WTC11 (cell line): ENCODE measurements at regions of chr6 and their contacts with region 1.

Region 1: GRCh38 chr6:158660333-158660754 is 10.5 kb downstream of the SYTL3 start:
- DNase-seq: peak; percentile 52
- ATAC-seq: peak; percentile 78
- H3K4me3 Mint-ChIP-seq: no peak overlapping the region
- H3K27ac Mint-ChIP-seq: no peak overlapping the region
- H3K4me1 Mint-ChIP-seq: peaks cover 23% of the 10 kb centered on the region
- H3K27me3 Mint-ChIP-seq: peaks cover 2% of the 10 kb centered on the region; the same call in 1 of the 2 replicates
- CTCF ChIP-seq: no peak; the same call in 1 of the 2 replicates

Region 2: GRCh38 chr6:158644231-158645063 is 15.9 kb before region 1 on chr6 and contains the start of gene DYNLT1:
- CTCF ChIA-PET with region 1: interaction called, 36 read pairs
- POLR2A ChIA-PET with region 1: interaction called, 3 read pairs
- DNase-seq: peak; percentile 94
- ATAC-seq: peak; percentile 96
- H3K4me3 Mint-ChIP-seq: peak within 1 kb of the TSS; percentile 97
- H3K27ac Mint-ChIP-seq: peak within 1 kb of the TSS; percentile 95
- H3K4me1 Mint-ChIP-seq: peaks cover 33% of the 10 kb centered on the region
- H3K27me3 Mint-ChIP-seq: peaks cover 15% of the 10 kb centered on the region
- CTCF ChIP-seq: no peak
- total RNA-seq, gene DYNLT1: 79.0 to 98.1 TPM (median 91.8 TPM) in 3 replicates

Region 3: DNA sequence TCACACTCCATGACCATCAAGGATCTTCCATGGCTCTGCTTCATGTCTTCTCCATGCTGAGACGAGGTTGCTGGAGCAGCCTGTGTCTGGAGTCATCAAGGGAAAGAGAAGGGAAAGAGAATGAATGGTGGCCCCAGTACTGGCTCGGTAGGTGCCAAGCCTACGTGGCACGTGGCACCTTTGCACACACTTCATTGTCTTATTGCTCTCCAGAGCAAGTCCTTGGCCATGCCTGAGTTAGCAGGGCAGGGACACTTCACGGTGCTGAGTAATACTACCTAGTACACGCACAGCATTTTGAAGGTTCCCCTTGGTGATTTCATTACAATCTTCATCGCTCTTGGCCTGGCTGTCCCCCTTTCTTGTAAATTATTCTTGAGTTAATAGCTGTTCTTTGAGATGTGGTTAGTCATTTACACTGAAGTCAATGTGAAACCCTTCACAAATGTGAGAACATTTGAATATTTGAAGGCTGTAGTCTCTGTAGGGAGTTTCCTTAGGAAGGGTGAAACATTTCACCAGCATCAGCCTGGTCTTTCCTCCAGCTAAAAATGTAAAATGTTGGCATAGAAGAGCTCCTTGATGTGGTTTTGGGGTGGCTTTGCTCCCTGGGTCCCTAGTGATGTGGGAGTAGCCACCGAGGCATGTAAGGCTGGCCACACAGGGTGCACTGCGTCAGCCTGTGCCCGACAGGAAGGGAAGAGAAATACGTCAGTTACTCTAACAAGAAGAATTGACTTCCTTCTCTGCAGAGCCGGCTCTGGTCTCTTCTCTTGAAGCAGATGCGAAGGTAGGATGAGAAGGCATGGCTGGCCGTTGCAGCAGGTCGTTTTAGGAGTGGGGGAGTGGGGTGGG is 10.8 kb before region 1 on chr6 and contains the start of gene SYTL3:
- CTCF ChIA-PET with region 1: interaction called, 36 read pairs
- POLR2A ChIA-PET with region 1: interaction called, 3 read pairs
- DNase-seq: no peak
- ATAC-seq: no peak
- H3K4me3 Mint-ChIP-seq: no peak within 1 kb of the TSS
- H3K27ac Mint-ChIP-seq: no peak within 1 kb of the TSS
- H3K4me1 Mint-ChIP-seq: peaks cover 15% of the 10 kb centered on the region
- H3K27me3 Mint-ChIP-seq: peaks cover 15% of the 10 kb centered on the region
- CTCF ChIP-seq: no peak
- total RNA-seq, gene SYTL3: 0.27 to 0.39 TPM (median 0.28 TPM) in 3 replicates